ENCODE measurements at regions of chr3 and their contacts with region 1.

Region 1: DNA sequence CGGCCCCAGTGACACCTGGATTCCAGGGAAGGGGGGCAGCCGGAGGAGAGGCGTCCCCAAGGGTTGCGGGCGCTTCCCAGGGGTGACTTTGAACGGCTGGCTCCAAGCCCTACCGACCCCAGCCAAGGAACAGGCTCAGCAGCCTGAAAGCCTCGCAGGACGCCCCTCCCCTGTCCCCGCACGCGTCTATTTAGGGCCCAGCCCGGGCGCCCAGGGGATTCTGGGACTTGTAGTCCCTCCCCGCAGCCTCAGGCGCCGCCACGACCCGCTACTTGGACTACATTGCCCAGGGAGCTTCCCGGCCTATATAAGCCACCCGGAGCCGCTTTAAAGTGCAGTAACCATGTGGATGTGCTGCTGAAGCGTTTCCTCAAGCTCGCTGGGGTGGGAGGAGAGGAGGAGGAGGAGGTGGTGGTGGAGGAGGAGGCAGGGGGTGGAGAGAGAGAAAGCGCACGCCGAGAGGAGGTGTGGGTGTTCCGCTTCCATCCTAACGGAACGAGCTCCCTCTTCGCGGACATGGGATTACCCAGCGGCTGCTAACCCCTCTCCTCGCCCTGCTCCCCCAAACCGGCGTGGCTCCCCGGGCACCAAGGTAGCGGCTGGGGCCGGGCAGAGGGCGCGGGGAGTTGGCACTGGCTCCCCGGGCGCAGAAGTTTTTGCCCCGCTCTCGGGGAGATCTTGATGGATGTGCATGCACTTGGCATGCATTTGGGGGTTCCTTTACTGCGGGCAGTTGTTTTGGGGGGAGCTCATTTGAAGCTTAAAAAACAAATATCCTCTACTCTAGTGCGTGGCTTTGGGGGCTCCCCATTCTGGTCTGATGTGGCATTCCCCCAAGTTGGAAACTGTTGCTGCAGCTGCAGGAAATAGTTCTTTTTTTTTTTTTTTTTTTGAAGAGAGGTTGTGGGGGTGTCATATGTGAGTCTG is at the start of gene ITPR1:
- DNase-seq: peak; percentile 91 to 99 (median 98)
- ATAC-seq: peak; percentile 95
- H3K4me3 ChIP-seq: peak within 1 kb of the TSS; percentile 84
- H3K4me3 Mint-ChIP-seq: peak within 1 kb of the TSS; percentile 93 to 98 (median 96)
- H3K27ac ChIP-seq: peak within 1 kb of the TSS; percentile 89
- H3K27ac Mint-ChIP-seq: peak within 1 kb of the TSS; percentile 86 to 96 (median 90)
- H3K4me1 ChIP-seq: peaks cover 14 to 17% of the 10 kb centered on the region in 2 donors
- H3K4me1 Mint-ChIP-seq: peaks cover 36 to 57% (median 41%) of the 10 kb centered on the region in 7 donors
- H3K27me3 ChIP-seq: no peaks in the 10 kb centered on the region
- H3K27me3 Mint-ChIP-seq: peaks cover 0 to 40% (median 0%) of the 10 kb centered on the region in 5 donors
- total RNA-seq, gene ITPR1: 66.7 to 118 (median 90.7) TPM

Region 2: DNA sequence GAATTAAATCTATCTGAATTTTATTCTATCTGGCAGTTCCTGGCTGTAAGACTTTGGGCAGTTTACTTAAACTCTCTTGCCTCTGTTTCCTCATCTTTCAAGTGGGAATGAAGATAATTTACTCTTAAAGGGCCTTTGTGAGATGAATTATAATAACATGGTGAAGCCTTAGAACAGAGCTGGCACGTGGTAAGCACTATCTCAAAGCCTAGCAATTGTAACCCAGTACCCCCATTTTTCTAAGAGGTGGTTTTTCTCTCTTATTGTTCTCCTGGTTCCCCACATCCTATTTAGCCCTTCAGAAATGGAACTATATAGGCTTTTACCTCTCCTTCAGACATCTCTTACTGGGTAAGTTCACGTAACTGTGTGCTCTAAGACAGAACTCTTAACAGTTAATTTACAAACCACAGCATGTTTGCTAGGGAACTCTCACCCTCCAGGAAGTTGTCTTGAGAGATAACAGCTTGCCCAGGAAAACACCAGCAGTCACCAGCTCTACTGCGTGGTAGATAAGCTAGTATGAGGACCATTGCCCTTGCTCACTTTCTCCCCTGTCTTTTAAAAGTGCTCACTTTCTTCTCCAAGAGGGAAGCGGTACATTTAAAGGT is 1301.5 kb before region 1 on chr3:
- CTCF ChIA-PET with region 1: no interaction called
- POLR2A ChIA-PET with region 1: interaction called, 4 read pairs
- intact Hi-C with region 1: loop called in 1 of 2 experiments (anchors 5 kb)
- DNase-seq: peak in 7 of 9 donors; percentile 25 to 58 (median 44)
- ATAC-seq: peak; percentile 89
- H3K4me3 ChIP-seq: peak overlapping the region; percentile 18
- H3K4me3 Mint-ChIP-seq: peak overlapping the region; percentile 54 to 92 (median 78)
- H3K27ac ChIP-seq: peak overlapping the region; percentile 66
- H3K27ac Mint-ChIP-seq: peak overlapping the region; percentile 39 to 98 (median 91)
- H3K4me1 ChIP-seq: peaks cover 20 to 42% of the 10 kb centered on the region in 2 donors
- H3K4me1 Mint-ChIP-seq: peaks cover 27 to 65% (median 60%) of the 10 kb centered on the region in 7 donors
- H3K27me3 ChIP-seq: no peaks in the 10 kb centered on the region
- H3K27me3 Mint-ChIP-seq: peaks cover 0 to 21% (median 0%) of the 10 kb centered on the region in 5 donors

Region 3: GRCh38 chr3:4231041-4231440 is 262.2 kb before region 1 on chr3:
- CTCF ChIA-PET with region 1: no interaction called
- POLR2A ChIA-PET with region 1: no interaction called
- intact Hi-C with region 1: no loop called
- DNase-seq: no peak
- ATAC-seq: no peak
- H3K4me3 ChIP-seq: no peak overlapping the region
- H3K4me3 Mint-ChIP-seq: no peak overlapping the region
- H3K27ac ChIP-seq: no peak overlapping the region
- H3K27ac Mint-ChIP-seq: no peak overlapping the region
- H3K4me1 ChIP-seq: no peaks in the 10 kb centered on the region
- H3K4me1 Mint-ChIP-seq: peaks cover 0 to 5% (median 0%) of the 10 kb centered on the region in 7 donors
- H3K27me3 ChIP-seq: no peaks in the 10 kb centered on the region
- H3K27me3 Mint-ChIP-seq: no peaks in the 10 kb centered on the region

Region 4: GRCh38 chr3:4261406-4261805 is 231.9 kb before region 1 on chr3:
- CTCF ChIA-PET with region 1: no interaction called
- POLR2A ChIA-PET with region 1: no interaction called
- intact Hi-C with region 1: no loop called
- DNase-seq: no peak
- ATAC-seq: no peak
- H3K4me3 ChIP-seq: no peak overlapping the region
- H3K4me3 Mint-ChIP-seq: no peak overlapping the region
- H3K27ac ChIP-seq: no peak overlapping the region
- H3K27ac Mint-ChIP-seq: no peak overlapping the region
- H3K4me1 ChIP-seq: no peaks in the 10 kb centered on the region
- H3K4me1 Mint-ChIP-seq: no peaks in the 10 kb centered on the region
- H3K27me3 ChIP-seq: no peaks in the 10 kb centered on the region
- H3K27me3 Mint-ChIP-seq: no peaks in the 10 kb centered on the region

Region 5: GRCh38 chr3:4466741-4467521 is 26.3 kb before region 1 on chr3 and contains the start of gene SUMF1:
- CTCF ChIA-PET with region 1: interaction called, 4 read pairs
- POLR2A ChIA-PET with region 1: interaction called, 55 read pairs
- intact Hi-C with region 1: loop called (anchors 1 kb)
- DNase-seq: peak; percentile 59 to 79 (median 70)
- ATAC-seq: peak; percentile 98
- H3K4me3 ChIP-seq: peak within 1 kb of the TSS; percentile 90
- H3K4me3 Mint-ChIP-seq: peak within 1 kb of the TSS; percentile 90 to 95 (median 92)
- H3K27ac ChIP-seq: peak within 1 kb of the TSS; percentile 77
- H3K27ac Mint-ChIP-seq: peak within 1 kb of the TSS; percentile 86 to 96 (median 94)
- H3K4me1 ChIP-seq: peaks cover 5 to 7% of the 10 kb centered on the region in 2 donors
- H3K4me1 Mint-ChIP-seq: peaks cover 12 to 38% (median 21%) of the 10 kb centered on the region in 7 donors
- H3K27me3 ChIP-seq: no peaks in the 10 kb centered on the region
- H3K27me3 Mint-ChIP-seq: peaks cover 0 to 2% (median under 1%) of the 10 kb centered on the region in 5 donors
- total RNA-seq, gene SUMF1: 9.2 to 20.0 (median 16.0) TPM

Region 6: DNA sequence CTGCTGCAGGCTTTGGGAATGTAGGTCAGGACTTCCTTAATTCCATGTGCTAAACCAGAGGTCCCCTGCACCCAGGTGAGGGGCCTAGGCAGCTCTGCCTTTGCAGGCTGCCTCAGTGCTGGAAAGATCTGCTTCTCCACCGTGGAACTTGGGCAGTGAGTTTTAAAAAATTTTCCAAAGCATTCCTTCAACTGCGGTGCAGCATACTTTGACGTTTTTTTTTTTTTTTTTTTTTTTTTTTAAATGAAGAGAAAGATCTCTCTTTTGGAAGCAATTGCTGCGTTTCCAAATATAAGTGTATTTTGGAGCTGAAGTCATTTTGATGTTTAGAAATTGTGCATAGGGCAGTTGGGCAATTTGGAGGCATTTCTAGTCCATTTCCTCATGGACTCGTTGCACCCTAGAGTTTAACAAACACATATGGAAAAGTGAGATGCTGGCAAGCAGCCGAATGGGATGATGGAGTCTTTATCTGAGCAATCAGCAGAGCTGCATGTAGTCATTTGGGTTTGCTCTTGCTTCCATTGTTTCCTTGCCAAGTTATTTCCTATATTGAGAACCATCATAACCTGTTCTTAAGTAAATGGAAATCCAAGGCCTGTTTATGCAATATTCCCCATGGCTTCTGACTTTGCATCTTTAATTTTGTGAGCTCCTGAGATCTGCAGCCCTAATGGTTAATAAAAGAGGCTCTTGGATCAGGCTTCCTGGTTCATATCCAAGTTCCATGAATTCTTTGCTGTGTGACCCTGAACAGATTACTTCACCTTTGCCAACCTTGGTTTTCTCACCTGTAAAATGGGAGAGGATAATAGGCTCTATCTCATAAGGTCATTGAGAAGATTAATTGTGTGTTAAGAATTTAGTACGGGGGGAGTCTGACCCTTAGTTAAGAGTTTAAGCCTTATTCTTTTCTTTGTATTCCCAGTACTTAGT is 31.1 kb after region 1 on chr3:
- CTCF ChIA-PET with region 1: interaction called, 31 read pairs
- POLR2A ChIA-PET with region 1: interaction called, 97 read pairs
- intact Hi-C with region 1: loop called (anchors 1 kb)
- DNase-seq: no peak
- ATAC-seq: no peak
- H3K4me3 ChIP-seq: no peak overlapping the region
- H3K4me3 Mint-ChIP-seq: no peak overlapping the region
- H3K27ac ChIP-seq: no peak overlapping the region
- H3K27ac Mint-ChIP-seq: no peak overlapping the region
- H3K4me1 ChIP-seq: peaks cover 3 to 6% of the 10 kb centered on the region in 2 donors
- H3K4me1 Mint-ChIP-seq: peaks cover 21 to 65% (median 34%) of the 10 kb centered on the region in 7 donors
- H3K27me3 ChIP-seq: no peaks in the 10 kb centered on the region
- H3K27me3 Mint-ChIP-seq: no peaks in the 10 kb centered on the region

Region 7: DNA sequence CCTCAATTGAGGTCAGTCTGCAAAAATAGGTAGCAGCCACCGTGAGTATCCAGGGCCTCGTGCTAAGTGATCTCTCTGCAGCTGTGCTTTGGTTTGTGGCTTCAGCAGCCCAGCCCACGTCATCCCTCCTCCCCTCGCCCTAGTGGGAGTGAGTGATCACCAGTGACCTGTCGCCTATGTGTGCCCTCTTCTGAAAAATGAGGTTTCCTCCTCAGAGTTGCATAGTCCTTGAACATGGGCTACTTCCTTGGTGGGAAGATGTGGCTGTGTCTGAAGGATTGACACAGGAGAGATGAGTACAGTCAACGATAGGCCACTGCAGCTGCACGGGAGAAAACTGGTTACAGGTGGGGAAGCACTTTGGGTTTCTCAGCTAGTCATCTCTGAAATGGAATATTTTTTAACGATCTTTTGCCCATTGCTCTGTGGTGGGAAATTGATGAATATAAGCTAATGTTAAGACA is 341.2 kb after region 1 on chr3:
- CTCF ChIA-PET with region 1: no interaction called
- POLR2A ChIA-PET with region 1: interaction called, 8 read pairs
- intact Hi-C with region 1: loop called in 1 of 2 experiments (anchors 5 kb)
- DNase-seq: peak in 5 of 9 donors; percentile 28 to 79 (median 39)
- ATAC-seq: peak; percentile 64
- H3K4me3 ChIP-seq: no peak overlapping the region
- H3K4me3 Mint-ChIP-seq: peak overlapping the region; percentile 21 to 86 (median 47)
- H3K27ac ChIP-seq: peak overlapping the region; percentile 55
- H3K27ac Mint-ChIP-seq: peak overlapping the region; percentile 74 to 99 (median 90)
- H3K4me1 ChIP-seq: peaks cover 53 to 67% of the 10 kb centered on the region in 2 donors
- H3K4me1 Mint-ChIP-seq: peaks cover 56 to 89% (median 80%) of the 10 kb centered on the region in 7 donors
- H3K27me3 ChIP-seq: no peaks in the 10 kb centered on the region
- H3K27me3 Mint-ChIP-seq: peaks cover 0 to 3% (median 0%) of the 10 kb centered on the region in 5 donors

Region 8: DNA sequence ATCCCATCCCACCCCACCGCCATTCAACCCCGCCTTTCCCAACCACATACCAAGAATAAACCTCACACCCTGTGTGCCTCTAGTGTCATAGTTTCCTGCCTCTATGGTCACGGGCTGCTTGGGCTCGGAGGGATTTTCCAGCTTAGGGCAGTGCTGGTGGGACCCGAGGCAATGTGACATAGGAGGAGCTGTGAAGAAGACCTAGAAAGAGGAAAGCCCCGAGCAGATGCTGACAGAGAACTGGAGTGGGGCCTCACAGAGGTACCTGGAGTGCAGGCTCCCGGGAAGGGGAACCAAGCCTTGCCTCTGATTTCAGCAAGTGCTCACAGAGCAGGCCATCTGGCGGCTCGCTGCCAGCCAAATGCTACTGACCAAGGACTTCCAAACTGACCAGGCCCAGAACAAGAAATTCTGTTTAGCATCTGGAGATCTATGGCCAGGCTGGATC is 513.5 kb after region 1 on chr3:
- CTCF ChIA-PET with region 1: no interaction called
- POLR2A ChIA-PET with region 1: no interaction called
- intact Hi-C with region 1: loop called in 1 of 2 experiments (anchors 5 kb)
- DNase-seq: peak in 2 of 9 donors; percentile 22 to 82
- ATAC-seq: peak; percentile 83
- H3K4me3 ChIP-seq: no peak overlapping the region
- H3K4me3 Mint-ChIP-seq: peak overlapping the region in 2 of 10 donors; percentile 42 to 55
- H3K27ac ChIP-seq: no peak overlapping the region
- H3K27ac Mint-ChIP-seq: peak overlapping the region in 5 of 9 donors; percentile 28 to 82 (median 54)
- H3K4me1 ChIP-seq: peaks cover 0 to 39% of the 10 kb centered on the region in 2 donors
- H3K4me1 Mint-ChIP-seq: peaks cover 0 to 67% (median 7%) of the 10 kb centered on the region in 7 donors
- H3K27me3 ChIP-seq: no peaks in the 10 kb centered on the region
- H3K27me3 Mint-ChIP-seq: peaks cover 0 to 8% (median 0%) of the 10 kb centered on the region in 5 donors

Region 9: DNA sequence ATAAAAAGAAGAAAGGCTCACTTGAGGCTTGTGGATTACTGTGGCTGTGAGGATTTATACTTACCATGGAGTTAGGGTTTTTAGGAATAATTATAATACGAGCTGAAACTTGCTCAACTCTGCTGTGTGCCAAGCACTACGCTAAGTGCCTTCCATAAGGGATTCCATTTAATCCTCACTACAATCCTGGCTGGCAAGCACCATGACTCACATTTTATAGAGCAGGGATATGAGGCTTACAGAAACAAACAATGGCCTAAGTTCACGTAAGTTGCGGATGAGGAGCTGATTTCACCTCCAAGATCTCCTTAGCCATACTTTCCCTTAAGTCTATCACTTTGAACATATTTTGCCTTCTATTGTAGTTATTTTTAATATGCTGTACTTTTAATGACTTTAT is 584.9 kb after region 1 on chr3:
- CTCF ChIA-PET with region 1: no interaction called
- POLR2A ChIA-PET with region 1: no interaction called
- intact Hi-C with region 1: no loop called
- DNase-seq: no peak
- ATAC-seq: no peak
- H3K4me3 ChIP-seq: no peak overlapping the region
- H3K4me3 Mint-ChIP-seq: no peak overlapping the region
- H3K27ac ChIP-seq: no peak overlapping the region
- H3K27ac Mint-ChIP-seq: no peak overlapping the region
- H3K4me1 ChIP-seq: no peaks in the 10 kb centered on the region
- H3K4me1 Mint-ChIP-seq: no peaks in the 10 kb centered on the region
- H3K27me3 ChIP-seq: no peaks in the 10 kb centered on the region
- H3K27me3 Mint-ChIP-seq: peaks cover 0 to 27% (median 0%) of the 10 kb centered on the region in 5 donors